BJ (cell line): ENCODE measurements at regions of chr16 and their contacts with region 1.

Region 1: GRCh38 chr16:69396187-69397061 is 10.6 kb upstream of the TERF2 start:
- DNase-seq: peak; percentile 74
- H3K4me3 ChIP-seq: no peak overlapping the region
- H3K27me3 ChIP-seq: no peaks in the 10 kb centered on the region
- CTCF ChIP-seq: peak; percentile 59

Region 2: GRCh38 chr16:69253870-69254341 is 142.5 kb before region 1 on chr16:
- CTCF ChIA-PET with region 1: no interaction called
- POLR2A ChIA-PET with region 1: interaction called, 12 read pairs
- DNase-seq: no peak
- H3K4me3 ChIP-seq: no peak overlapping the region
- H3K27me3 ChIP-seq: no peaks in the 10 kb centered on the region
- CTCF ChIP-seq: no peak